Activated CD4-positive, alpha-beta memory T cell treated with anti-CD3 and anti-CD28 coated beads, Interleukin-2, amount 10 ng/mL, durations not matched to agents 7 days and 5 days (primary cell): ENCODE measurements at regions of chr12 and their contacts with region 1.

Region 1: DNA sequence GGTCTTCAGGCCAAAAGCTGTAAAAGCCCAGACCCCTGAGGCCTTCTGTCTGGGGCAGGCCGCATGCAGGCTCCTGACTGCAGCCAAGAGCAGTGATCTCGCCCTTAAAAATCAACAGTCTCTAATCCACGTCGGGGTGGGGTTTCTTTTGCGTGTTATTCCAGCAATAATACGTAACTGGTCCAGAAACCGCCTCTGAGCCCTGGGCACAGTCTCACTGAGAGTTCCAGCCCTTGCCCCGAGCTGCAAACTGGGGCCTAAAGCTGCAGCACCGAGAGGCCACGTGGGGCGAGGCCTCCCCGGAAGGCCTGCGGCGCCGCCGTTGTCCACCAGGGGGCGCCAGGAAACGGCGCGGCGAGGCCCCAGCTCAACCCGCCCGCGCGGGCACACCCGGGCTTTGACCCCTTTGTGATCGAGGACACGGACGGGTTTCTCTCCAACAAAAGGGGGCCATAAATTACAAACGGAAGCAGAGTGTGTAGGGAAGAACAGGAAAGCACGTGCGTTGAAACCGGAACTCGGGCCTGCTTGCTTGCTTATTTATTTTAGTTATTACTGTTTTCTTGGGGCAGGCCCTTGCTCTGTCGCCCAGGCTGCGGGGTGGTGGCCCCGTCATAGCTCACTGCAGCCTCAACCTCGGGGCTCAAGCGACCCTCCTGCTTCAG is 87.2 kb downstream of the NINJ2 start:
- DNase-seq: peak; percentile 88
- H3K4me3 Mint-ChIP-seq: peak overlapping the region; percentile 19
- H3K27ac Mint-ChIP-seq: peak overlapping the region; percentile 59
- H3K4me1 Mint-ChIP-seq: peaks cover 50% of the 10 kb centered on the region
- H3K27me3 Mint-ChIP-seq: peaks cover 2% of the 10 kb centered on the region

Region 2: DNA sequence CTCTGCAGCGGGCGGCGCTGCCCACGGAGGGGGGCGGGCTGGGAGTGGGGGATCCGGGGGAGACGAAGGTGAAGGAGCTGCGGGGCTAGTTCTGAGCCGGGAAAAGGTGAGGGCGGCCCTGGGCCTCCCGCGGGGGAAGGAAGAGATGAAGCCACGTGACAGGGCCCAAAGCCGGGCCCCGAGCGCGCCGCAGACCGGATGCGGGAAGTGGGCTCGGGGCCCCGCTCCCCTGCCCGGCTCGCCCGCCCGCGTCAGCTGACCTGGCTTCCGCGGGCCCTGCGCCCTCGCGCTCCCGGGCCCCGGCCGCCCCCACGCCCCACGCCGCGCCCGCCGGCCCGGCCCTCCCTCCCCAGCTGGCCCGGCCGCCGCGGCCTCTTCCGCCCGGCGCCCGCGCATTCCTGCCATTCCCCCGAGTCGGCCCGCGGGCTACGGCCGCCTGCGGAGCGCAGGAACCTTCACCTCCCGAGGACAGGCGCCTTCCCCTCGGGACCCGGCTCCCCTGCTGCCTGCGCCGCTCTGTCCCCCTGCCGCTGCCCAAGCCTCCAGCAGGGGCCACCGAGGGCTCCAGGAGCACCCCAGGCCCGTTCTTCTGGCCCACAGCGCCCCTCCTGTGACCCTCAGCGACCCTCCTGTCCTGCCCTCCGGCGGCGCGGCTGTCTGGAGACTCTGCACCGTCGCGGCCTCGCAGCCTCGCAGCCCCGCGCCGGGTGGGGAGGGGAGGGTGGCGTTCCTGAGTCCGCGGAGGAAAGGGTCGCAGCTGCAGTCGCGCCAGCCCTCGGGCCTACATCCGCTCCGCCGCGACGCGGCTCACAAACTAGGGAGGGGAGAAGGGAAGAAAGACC is 66.8 kb after region 1 on chr12:
- CTCF ChIA-PET with region 1: interaction called, 6 read pairs
- POLR2A ChIA-PET with region 1: interaction called, 13 read pairs
- DNase-seq: peak; percentile 87
- H3K4me3 Mint-ChIP-seq: peak overlapping the region; percentile 84
- H3K27ac Mint-ChIP-seq: peak overlapping the region; percentile 94
- H3K4me1 Mint-ChIP-seq: peaks cover 64% of the 10 kb centered on the region
- H3K27me3 Mint-ChIP-seq: no peaks in the 10 kb centered on the region

Region 3: DNA sequence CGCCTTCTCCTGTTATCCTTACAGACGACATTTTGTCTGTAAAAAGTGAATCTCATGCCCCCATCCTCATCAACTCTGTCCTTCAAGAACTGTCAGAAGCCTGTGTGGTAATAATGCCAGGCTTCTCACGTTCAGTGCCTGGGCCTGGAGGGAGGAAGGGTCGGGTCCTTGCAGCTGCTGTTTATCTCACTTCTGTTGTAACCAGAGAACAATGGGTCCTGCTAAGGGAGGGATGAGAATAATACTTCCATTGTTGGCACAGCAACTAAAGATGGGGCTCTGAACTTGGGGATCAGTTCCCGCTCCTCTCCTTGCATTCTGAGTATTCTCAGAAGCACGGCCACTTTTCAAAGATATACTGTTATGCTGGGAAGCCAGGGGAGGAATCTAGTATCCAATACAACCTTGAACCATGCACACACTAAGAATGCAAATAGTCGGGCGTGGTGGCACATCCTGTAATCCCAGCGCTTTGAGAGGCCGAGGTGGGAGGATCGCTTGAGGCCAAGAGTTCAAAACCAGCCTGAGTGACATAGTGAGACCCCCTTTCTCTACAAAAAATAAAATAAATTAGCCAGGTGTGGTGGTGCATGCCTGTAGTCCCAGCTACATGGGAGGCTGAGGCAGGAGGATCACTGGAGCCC is 125.9 kb after region 1 on chr12:
- CTCF ChIA-PET with region 1: no interaction called
- POLR2A ChIA-PET with region 1: no interaction called
- DNase-seq: no peak
- H3K4me3 Mint-ChIP-seq: no peak overlapping the region
- H3K27ac Mint-ChIP-seq: no peak overlapping the region
- H3K4me1 Mint-ChIP-seq: peaks cover 22% of the 10 kb centered on the region
- H3K27me3 Mint-ChIP-seq: no peaks in the 10 kb centered on the region

Region 4: GRCh38 chr12:761256-761655 is 185.2 kb after region 1 on chr12:
- CTCF ChIA-PET with region 1: interaction called, 25 read pairs
- POLR2A ChIA-PET with region 1: interaction called, 7 read pairs
- DNase-seq: no peak
- H3K4me3 Mint-ChIP-seq: no peak overlapping the region
- H3K27ac Mint-ChIP-seq: no peak overlapping the region
- H3K4me1 Mint-ChIP-seq: peaks cover 59% of the 10 kb centered on the region
- H3K27me3 Mint-ChIP-seq: no peaks in the 10 kb centered on the region

Region 5: DNA sequence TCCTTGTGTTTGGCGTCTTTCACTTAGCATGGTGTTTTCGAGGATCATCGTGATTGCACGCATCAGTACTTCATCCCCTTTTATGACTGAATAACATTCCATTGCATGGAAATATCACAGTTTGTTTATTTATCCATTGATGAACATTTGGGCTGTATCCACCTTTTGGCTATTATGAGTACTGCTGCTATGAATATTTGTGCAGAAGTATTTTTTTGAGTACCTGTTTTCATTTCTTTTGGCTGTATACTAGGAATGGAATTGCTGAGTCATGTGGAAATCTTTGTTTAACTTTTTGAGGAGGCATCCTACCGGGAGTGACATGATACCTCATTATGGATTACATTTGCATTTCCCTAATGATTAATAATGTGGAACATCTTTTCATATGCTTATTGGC is 242.7 kb after region 1 on chr12:
- CTCF ChIA-PET with region 1: interaction called, 77 read pairs
- POLR2A ChIA-PET with region 1: interaction called, 5 read pairs
- DNase-seq: no peak
- H3K4me3 Mint-ChIP-seq: no peak overlapping the region
- H3K27ac Mint-ChIP-seq: no peak overlapping the region
- H3K4me1 Mint-ChIP-seq: peaks cover 39% of the 10 kb centered on the region
- H3K27me3 Mint-ChIP-seq: no peaks in the 10 kb centered on the region